Uterus (tissue), 4 donors: ENCODE measurements at regions of chr15 and their contacts with region 1.

Region 1: DNA sequence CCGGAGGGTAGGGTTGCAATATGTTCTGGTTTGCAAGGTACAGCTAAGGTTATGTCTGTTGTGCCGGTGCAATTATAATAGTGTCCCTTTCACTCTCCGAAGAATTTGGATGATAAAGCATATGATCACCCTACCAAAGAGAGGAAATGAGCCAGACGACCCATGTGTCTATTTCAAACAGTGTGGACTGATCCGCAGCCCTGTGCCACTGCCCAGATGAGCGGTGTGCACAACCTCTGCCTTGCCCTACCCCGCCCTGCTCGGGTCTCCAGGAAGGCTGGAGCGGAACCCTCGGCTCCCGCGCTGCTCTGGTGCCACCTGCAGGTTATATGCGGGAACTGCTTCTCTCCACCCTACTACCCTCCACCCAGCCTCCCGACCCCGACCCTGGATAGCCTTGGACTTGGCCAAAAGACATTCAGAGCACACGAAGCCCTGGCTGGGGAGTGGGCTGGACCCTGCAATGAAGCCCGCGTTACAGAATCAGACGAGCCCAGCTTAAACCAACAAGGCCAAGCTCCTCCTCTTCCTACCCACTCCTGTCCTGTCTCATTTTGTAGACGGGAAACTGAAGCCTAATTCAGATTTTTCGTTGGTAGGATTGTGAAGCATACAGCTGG is 68.4 kb upstream of the CHRNB4 start:
- DNase-seq: peak; percentile 56 to 73
- H3K4me3 ChIP-seq: no peak overlapping the region
- H3K27ac ChIP-seq: no peak overlapping the region
- H3K4me1 ChIP-seq: no peaks in the 10 kb centered on the region
- H3K27me3 ChIP-seq: no peaks in the 10 kb centered on the region
- CTCF ChIP-seq: peak; percentile 83 to 93 (median 90)
- POLR2A ChIP-seq: no peak

Region 2: DNA sequence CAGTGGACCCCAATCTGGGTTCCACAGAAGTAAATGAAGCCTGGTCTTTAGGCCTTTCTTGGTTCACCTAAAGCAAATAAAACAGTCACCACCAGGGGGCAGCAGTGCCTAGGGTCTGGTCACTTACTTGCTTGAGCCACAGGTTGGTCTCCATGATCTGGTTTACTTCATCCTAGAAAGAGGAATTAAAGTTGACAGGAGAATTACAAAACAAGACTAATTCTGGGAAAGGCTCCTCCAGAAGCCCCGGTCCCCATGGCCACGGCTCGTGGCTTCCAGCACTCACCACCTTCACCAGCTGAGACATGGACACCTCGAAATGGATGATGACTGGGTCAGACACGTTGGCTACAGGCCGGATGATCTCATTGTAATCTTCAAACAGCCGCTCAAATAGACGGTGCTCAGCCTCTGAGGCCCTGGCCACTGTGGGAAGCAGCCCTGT is 90.9 kb before region 1 on chr15:
- intact Hi-C with region 1: loop called (anchors 5 kb)
- DNase-seq: peak; percentile 85 to 95
- H3K4me3 ChIP-seq: no peak overlapping the region
- H3K27ac ChIP-seq: peak overlapping the region in 1 of 2 donors; percentile 29
- H3K4me1 ChIP-seq: peaks cover 0 to 4% of the 10 kb centered on the region in 2 donors
- H3K27me3 ChIP-seq: peaks cover 5 to 15% of the 10 kb centered on the region in 2 donors
- CTCF ChIP-seq: peak; percentile 84 to 90 (median 88)
- POLR2A ChIP-seq: no peak